WTC11 (cell line): ENCODE measurements at regions of chr5 and their contacts with region 1.

Region 1: GRCh38 chr5:97133101-97133500 is 9.3 kb downstream of the LIX1 start:
- DNase-seq: no peak
- ATAC-seq: no peak
- H3K4me3 Mint-ChIP-seq: no peak overlapping the region
- H3K27ac Mint-ChIP-seq: no peak overlapping the region
- H3K4me1 Mint-ChIP-seq: peaks cover 11% of the 10 kb centered on the region
- H3K27me3 Mint-ChIP-seq: no peaks in the 10 kb centered on the region
- CTCF ChIP-seq: no peak

Region 2: GRCh38 chr5:97044052-97044451 is 89.0 kb before region 1 on chr5:
- CTCF ChIA-PET with region 1: interaction called, 12 read pairs
- POLR2A ChIA-PET with region 1: no interaction called
- DNase-seq: peak; percentile 76
- ATAC-seq: peak; percentile 97
- H3K4me3 Mint-ChIP-seq: no peak overlapping the region
- H3K27ac Mint-ChIP-seq: no peak overlapping the region; the same call in 1 of the 2 replicates
- H3K4me1 Mint-ChIP-seq: peaks cover 33% of the 10 kb centered on the region
- H3K27me3 Mint-ChIP-seq: no peaks in the 10 kb centered on the region
- CTCF ChIP-seq: peak; percentile 30; the same call in 1 of the 2 replicates

Region 3: GRCh38 chr5:97118261-97119006 is 14.7 kb before region 1 on chr5:
- CTCF ChIA-PET with region 1: no interaction called
- POLR2A ChIA-PET with region 1: no interaction called
- DNase-seq: no peak
- ATAC-seq: no peak
- H3K4me3 Mint-ChIP-seq: no peak overlapping the region
- H3K27ac Mint-ChIP-seq: peak overlapping the region; percentile 34; the same call in 1 of the 2 replicates
- H3K4me1 Mint-ChIP-seq: peaks cover 17% of the 10 kb centered on the region
- H3K27me3 Mint-ChIP-seq: no peaks in the 10 kb centered on the region
- CTCF ChIP-seq: no peak